ENCODE measurements at regions of chr3 and their contacts with region 1.

Region 1: GRCh38 chr3:52001443-52001974 is 5.8 kb upstream of the RPL29 start:
- DNase-seq: no peak
- H3K4me3 ChIP-seq: no peak overlapping the region
- H3K27me3 ChIP-seq: no peaks in the 10 kb centered on the region
- CTCF ChIP-seq: peak; percentile 96

Region 2: DNA sequence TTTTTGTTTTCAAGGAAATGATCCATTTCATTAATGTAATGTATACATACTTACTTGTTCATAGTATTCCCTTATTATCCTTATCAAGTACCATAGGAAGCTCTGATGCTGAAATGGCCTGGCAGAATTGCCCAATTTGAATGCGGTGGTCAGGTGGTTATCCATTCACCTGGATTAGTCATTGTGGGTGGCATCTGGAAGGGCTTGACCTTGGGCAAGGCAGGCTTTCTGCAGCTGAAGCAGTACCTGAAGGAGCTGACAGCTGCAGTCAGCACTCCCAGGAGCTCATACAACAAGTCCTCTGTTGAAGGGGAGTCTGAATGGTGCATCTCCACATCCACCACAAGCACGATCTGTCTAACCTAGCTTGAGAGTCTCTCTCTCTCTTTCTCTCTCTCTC is 113.9 kb before region 1 on chr3:
- CTCF ChIA-PET with region 1: no interaction called
- POLR2A ChIA-PET with region 1: no interaction called
- DNase-seq: no peak
- H3K4me3 ChIP-seq: no peak overlapping the region
- H3K27me3 ChIP-seq: 0 out of 2 replicates have a peak, but pooled peaks cover 2% of the 10 kb centered on the region
- CTCF ChIP-seq: no peak

Region 3: DNA sequence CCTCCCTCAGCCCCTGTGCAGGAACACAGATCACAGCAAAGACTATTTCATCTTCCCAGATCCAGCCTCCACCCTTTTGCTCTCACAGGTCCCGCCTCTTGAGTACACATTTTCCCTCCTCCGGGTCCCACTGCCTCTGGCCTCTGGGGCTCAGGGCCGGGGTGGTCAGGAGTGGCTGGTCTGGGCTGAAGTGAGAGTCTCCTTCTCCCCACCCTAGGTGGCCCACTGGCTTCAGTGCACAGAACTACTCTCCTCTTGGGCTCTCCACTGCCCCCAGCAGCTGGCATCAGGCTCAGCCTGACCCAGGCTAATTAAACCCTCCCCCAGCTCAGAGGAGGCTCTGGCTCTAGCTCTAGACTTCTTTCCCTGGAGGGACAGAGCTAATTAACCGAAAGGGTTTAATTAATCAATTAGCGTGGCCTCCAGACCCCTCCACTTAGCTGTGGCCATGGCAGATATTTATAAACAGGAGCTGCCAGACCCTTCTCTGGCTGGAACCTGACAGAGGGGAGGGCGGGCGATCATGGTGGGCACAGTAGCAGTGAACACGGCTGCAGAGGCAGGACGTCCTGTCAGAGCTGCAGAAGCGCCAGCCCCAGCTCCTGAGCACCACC is 39.7 kb after region 1 on chr3:
- CTCF ChIA-PET with region 1: interaction called, 11 read pairs
- POLR2A ChIA-PET with region 1: no interaction called
- DNase-seq: no peak
- H3K4me3 ChIP-seq: no peak overlapping the region
- H3K27me3 ChIP-seq: no peaks in the 10 kb centered on the region
- CTCF ChIP-seq: peak; percentile 40; the same call in 1 of the 2 replicates

Region 4: DNA sequence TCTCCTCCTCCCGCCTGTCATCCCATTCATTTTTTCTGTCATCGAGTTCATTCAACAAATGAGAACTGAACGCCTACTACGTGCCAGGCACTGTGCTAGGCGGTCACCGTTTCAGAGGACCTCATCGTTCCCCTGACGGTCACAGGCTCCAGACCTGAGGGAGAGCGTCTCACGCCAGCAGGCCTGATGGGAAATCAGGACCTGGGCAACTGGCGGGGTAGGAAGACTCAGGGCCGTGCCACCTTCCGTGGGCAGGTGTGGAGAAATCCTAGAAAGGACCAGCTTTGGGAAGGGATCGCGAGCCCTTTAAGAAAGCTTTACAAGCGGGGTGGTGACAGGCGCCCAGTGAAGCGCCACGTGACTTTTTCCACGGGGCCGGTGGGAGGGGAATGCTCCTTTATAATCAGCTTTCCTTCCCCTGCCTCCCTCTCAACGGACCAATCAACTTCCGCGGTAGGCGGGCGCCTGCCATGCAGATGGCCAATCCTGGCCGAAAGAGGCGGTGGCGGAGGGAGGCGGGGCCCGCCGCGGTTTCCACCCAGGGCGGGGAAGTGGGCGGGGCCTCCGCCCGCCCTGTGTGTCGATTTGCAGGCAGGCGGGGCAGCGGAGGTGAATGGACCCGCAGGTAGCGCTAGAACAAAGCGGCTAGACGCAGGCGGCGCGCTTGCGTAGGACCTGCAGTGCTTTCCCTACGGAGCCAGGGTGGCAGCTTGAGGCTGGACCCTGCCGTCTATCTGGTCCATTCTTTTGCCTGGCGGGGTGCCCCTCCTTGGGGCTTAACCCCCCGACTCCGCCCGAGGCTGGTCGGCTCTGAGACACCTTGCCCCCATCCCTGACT is 55.7 kb after region 1 on chr3:
- CTCF ChIA-PET with region 1: interaction called, 179 read pairs
- POLR2A ChIA-PET with region 1: interaction called, 3 read pairs
- DNase-seq: peak; percentile 91
- H3K4me3 ChIP-seq: peak overlapping the region; percentile 94
- H3K27me3 ChIP-seq: no peaks in the 10 kb centered on the region
- CTCF ChIP-seq: no peak

Region 5: DNA sequence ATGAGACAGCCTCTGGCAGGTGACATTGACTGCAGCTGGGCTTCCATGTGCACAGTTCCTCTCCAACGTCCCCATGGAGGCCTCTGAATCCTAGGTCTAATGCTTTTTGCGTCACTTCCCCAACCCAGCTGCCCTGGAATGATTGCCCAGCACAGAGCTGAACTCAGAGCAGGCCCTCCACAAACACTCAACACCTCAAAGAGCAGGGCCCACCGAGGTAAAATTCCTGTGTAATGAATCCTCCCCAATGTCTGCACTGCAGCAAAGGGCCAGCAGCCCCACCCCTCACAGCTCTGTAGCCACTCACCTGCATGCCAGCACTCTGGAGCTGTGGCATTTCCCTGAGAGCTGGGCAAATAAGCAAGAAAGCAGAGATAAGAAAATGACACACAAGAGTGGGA is 97.5 kb after region 1 on chr3:
- CTCF ChIA-PET with region 1: interaction called, 11 read pairs
- POLR2A ChIA-PET with region 1: no interaction called
- DNase-seq: no peak
- H3K4me3 ChIP-seq: no peak overlapping the region
- H3K27me3 ChIP-seq: no peaks in the 10 kb centered on the region
- CTCF ChIP-seq: no peak

Region 6: GRCh38 chr3:52123106-52123725 is 121.7 kb after region 1 on chr3:
- CTCF ChIA-PET with region 1: interaction called, 222 read pairs
- POLR2A ChIA-PET with region 1: no interaction called
- DNase-seq: no peak
- H3K4me3 ChIP-seq: no peak overlapping the region
- H3K27me3 ChIP-seq: no peaks in the 10 kb centered on the region
- CTCF ChIP-seq: peak; percentile 99

Region 7: DNA sequence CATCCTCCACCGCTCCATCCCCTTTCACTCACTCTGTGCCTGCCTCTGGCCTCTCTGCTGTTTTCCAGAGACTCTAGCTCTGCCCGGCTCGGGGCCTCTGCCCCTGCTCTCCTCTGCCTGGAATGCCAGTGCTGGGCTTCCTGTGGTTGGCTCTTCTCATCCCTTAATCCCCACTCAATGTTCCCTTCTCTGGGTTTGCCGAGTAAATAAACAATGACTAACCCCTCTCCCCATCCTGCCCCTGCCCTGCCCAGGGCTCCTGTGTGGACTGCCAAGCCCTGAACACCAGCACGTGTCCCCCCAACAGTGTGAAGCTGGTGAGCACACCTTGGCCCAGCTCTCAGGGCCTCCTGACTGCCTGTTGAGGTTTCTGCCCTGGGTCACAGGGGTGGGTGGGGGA is 505.9 kb after region 1 on chr3:
- CTCF ChIA-PET with region 1: no interaction called
- POLR2A ChIA-PET with region 1: no interaction called
- DNase-seq: no peak
- H3K4me3 ChIP-seq: no peak overlapping the region
- H3K27me3 ChIP-seq: peaks cover 2% of the 10 kb centered on the region
- CTCF ChIP-seq: no peak

Measured in BJ (cell line).